Activated CD4-positive, alpha-beta T cell treated with anti-CD3 and anti-CD28 coated beads, Interleukin-2, amount 10 ng/mL, durations not matched to agents 24 days and 14 days (primary cell): ENCODE measurements at regions of chr20 and their contacts with region 1.

Region 1: GRCh38 chr20:47600967-47601547 is 99.4 kb downstream of the NCOA3 start:
- DNase-seq: no peak
- H3K4me3 Mint-ChIP-seq: no peak overlapping the region
- H3K27ac Mint-ChIP-seq: no peak overlapping the region
- H3K4me1 Mint-ChIP-seq: peaks cover 44% of the 10 kb centered on the region
- H3K27me3 Mint-ChIP-seq: no peaks in the 10 kb centered on the region

Region 2: GRCh38 chr20:47568001-47568407 is 33.1 kb before region 1 on chr20:
- intact Hi-C with region 1: loop called (anchors 5 kb)
- DNase-seq: no peak
- H3K4me3 Mint-ChIP-seq: no peak overlapping the region
- H3K27ac Mint-ChIP-seq: peak overlapping the region; percentile 49
- H3K4me1 Mint-ChIP-seq: peaks cover 49% of the 10 kb centered on the region
- H3K27me3 Mint-ChIP-seq: no peaks in the 10 kb centered on the region

Region 3: DNA sequence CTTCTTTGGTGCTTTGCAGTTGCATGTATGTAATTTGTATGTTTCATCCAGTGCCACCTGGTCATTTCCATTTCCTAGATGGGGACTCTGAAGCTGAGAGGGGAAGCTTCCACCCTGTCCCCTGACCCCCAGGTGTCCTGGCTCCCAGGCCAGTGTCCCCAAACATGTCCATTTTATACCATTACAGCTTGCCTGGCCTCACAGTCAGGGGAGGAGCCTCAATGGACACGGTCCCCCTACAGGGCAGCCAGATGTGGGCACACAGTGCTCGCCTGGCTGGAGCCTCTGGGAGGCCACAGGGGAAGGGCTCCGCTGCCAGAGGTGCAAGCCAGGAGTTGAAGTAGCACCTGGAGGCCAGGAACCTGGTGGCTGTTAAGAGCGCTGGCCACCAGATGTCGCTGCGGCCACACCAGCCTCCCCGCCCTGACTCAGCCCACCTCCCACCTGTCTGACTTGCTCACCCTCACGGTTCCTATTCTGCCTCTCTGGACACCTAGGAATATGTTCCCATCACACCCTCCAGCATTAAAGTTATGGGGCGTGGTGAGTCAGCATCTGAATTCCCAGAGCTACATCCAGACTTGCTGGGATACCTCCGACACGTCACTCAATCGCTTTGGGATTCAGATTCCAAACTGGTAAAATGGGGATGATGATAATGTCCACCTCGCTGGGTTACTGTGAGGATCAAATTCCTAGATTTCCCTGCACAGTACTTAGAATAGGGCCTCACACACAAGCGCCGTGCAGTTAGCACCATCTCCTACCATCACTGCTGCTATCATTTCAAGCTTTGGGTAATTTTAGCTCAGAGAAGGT is 76.8 kb after region 1 on chr20:
- intact Hi-C with region 1: no loop called
- DNase-seq: peak; percentile 86
- H3K4me3 Mint-ChIP-seq: no peak overlapping the region
- H3K27ac Mint-ChIP-seq: no peak overlapping the region
- H3K4me1 Mint-ChIP-seq: no peaks in the 10 kb centered on the region
- H3K27me3 Mint-ChIP-seq: no peaks in the 10 kb centered on the region